ENCODE measurements at regions of chr5 and their contacts with region 1.

Region 1: DNA sequence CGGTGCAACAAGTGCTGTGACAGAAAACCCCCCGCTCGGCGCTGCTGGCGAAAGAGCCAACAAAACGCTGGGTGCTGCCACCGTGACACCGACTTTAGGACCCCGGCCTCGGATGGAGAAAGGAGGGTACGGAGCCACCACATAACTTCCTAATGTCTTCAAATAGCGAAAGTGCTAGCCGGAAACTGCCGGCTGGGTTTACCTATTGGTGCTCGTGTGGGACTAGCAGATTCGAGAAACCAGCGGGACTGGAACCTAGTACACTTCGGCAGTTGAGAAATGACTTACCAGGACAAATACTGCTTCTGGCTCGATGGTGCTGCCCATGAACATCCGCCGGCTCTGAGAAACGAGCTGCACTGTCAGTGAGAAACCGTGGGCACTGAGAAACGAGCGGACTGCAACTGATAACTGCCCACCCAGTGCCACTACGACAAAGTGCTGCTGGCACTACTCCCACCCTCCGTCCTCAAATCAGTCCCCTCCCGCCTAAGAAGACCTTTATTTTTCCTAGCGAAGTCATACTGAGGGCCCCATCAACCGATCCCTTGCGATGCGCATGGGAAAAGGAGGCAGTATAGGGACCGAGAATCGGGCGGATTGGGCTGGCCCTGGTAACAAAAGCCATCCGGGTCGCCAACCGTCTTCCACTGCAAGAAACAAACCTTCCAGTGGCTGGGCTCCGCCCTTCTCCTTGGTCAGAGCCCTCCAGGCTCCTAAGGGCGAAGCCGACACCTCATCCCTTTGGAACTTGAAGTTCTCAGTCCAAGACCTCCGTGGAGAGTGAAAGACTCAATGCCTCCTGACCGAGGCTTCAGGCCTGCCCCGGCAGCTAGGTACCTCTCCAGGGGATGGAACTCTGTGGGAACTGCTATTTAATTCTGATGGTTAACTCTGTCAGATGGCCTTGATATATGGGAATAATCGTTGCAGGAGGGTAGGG is 27.0 kb upstream of the ANXA2R start:
- DNase-seq: peak; percentile 84 to 94 (median 90)
- ATAC-seq: peak; percentile 45
- H3K4me3 ChIP-seq: peak overlapping the region; percentile 78
- H3K4me3 Mint-ChIP-seq: peak overlapping the region; percentile 97
- H3K27ac ChIP-seq: peak overlapping the region; percentile 97 to 98
- H3K27ac Mint-ChIP-seq: peak overlapping the region; percentile 96
- H3K4me1 ChIP-seq: peaks cover 55% of the 10 kb centered on the region
- H3K4me1 Mint-ChIP-seq: peaks cover 49% of the 10 kb centered on the region
- H3K27me3 ChIP-seq: no peaks in the 10 kb centered on the region
- H3K27me3 Mint-ChIP-seq: no peaks in the 10 kb centered on the region
- CTCF ChIP-seq: no peak

Region 2: DNA sequence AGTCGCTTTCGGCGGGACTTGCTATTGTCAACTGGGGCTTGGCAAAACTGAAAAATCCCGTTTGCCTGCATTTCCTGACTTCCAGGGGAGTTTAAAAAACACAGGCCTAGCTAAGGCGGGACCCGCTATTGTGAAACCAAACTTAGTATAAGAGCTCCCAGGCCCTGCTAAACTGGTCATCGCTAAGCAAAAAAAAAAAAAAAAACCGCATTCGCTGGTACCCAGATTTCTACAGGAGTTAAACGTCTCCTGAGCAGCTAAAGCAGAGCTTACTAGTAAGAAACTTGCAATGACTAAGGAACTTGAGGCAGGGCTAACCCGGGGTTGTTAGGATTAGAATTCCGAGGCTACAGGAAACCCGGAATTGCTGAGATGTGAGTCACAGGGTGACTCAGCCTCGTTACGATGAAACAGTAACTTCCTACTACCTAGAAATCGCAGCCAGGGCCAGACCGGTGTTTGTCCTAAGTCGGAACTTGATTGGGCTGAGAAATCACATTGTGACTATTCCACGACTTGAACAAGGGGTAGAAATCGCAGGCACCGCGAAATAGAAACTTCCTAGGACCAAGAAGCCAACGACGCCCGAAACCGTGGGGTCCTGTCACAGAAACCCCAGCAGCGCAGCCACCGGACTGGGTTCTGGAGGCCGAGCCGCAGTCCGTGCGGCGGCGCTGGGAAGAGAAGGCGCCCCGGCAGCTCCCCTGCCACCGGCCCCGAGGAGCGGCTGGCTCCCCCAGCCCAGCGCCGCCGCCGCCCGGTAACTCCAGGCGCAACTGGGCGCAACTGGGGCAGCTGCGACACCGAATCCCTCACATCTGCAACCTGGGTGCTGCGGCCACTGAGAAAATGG is 116.4 kb before region 1 on chr5:
- CTCF ChIA-PET with region 1: interaction called, 6 read pairs
- POLR2A ChIA-PET with region 1: interaction called, 109 read pairs
- intact Hi-C with region 1: loop called (anchors 1 to 5 kb)
- DNase-seq: peak; percentile 35 to 90 (median 61)
- ATAC-seq: peak; percentile 41
- H3K4me3 ChIP-seq: peak overlapping the region; percentile 75
- H3K4me3 Mint-ChIP-seq: peak overlapping the region; percentile 98
- H3K27ac ChIP-seq: peak overlapping the region; percentile 96 to 98
- H3K27ac Mint-ChIP-seq: peak overlapping the region; percentile 99
- H3K4me1 ChIP-seq: peaks cover 45% of the 10 kb centered on the region
- H3K4me1 Mint-ChIP-seq: peaks cover 30% of the 10 kb centered on the region
- H3K27me3 ChIP-seq: no peaks in the 10 kb centered on the region
- H3K27me3 Mint-ChIP-seq: no peaks in the 10 kb centered on the region
- CTCF ChIP-seq: no peak

Region 3: DNA sequence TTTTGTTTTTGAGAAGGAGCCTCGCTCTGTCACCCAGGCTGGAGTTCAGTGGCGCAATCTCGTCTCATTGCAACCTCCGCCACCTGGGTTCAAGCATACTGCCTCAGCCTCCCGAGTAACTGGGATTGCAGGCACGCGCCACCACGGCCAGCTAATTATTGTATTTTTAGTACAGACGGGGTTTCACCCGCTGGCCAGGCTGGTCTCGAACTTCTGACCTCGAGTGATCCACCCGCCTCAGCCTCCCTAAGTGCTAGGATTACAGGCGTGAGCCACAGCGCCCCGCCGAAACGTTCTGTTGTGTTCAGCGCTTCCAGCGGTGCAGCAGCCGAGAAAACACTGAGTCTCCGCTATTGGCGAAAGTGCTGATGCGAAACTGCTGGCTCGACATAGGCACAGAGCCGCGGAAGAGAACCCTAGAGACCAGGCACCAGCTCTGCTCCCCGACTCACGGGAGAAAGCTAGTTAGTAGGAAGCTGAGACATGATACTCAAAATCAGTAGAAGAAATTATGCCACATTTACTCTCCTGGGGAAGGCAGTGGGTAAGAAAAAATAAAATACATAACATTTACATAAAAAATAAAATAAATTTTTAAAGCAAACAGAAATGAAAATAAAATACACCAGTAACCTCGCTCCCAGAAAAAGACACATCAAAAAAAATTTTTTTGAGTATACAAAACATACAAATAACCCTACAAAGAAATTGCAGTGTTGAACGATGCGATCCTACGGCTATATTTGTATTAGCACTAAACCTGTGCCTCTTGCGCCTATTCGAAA is 58.5 kb before region 1 on chr5:
- CTCF ChIA-PET with region 1: interaction called, 21 read pairs
- POLR2A ChIA-PET with region 1: interaction called, 398 read pairs
- intact Hi-C with region 1: loop called (anchors 1 kb)
- DNase-seq: peak; percentile 87 to 97 (median 92)
- ATAC-seq: peak; percentile 63
- H3K4me3 ChIP-seq: peak overlapping the region; percentile 82
- H3K4me3 Mint-ChIP-seq: peak overlapping the region; percentile 92
- H3K27ac ChIP-seq: peak overlapping the region; percentile 91 to 95
- H3K27ac Mint-ChIP-seq: peak overlapping the region; percentile 95
- H3K4me1 ChIP-seq: peaks cover 36% of the 10 kb centered on the region
- H3K4me1 Mint-ChIP-seq: peaks cover 42% of the 10 kb centered on the region
- H3K27me3 ChIP-seq: no peaks in the 10 kb centered on the region
- H3K27me3 Mint-ChIP-seq: no peaks in the 10 kb centered on the region
- CTCF ChIP-seq: no peak

Region 4: DNA sequence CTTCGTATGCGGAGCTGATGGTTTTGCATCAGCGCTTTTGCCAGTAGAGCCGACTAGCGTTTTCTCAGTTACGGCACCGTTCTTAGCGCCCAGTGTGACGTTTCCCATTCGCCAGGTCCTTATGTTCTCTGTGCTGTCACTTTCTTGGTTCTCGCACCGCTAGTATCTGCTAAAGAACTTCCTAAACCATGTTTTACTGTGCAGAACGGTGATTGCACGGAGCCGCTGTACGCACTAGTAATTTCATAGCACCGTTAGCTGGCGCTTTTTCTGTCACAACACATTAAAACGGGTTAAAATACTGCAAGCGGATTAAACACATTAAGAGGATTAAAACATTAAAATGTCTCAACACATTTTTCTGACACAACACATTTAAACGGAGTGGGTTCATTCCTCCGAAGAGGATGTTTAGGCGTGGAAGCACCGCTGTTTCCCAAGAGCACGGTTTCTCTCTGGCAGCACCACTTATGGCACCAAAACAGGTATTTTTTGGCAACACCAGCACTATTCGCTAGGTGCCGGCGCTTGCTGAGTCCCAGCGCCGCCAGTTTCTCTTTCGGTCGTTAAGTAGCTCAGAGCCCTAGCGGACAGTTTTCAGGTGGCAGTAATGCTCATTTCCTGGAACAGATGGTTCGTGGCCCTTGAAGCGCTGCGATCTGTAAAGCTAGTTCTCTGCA is 47.3 kb before region 1 on chr5:
- CTCF ChIA-PET with region 1: interaction called, 31 read pairs
- POLR2A ChIA-PET with region 1: interaction called, 398 read pairs
- intact Hi-C with region 1: loop called in 1 of 2 experiments (anchors 1 kb)
- DNase-seq: peak; percentile 73 to 97 (median 84)
- ATAC-seq: peak; percentile 61
- H3K4me3 ChIP-seq: peak overlapping the region; percentile 80
- H3K4me3 Mint-ChIP-seq: peak overlapping the region; percentile 99
- H3K27ac ChIP-seq: peak overlapping the region; percentile 98
- H3K27ac Mint-ChIP-seq: peak overlapping the region; percentile 100
- H3K4me1 ChIP-seq: peaks cover 42% of the 10 kb centered on the region
- H3K4me1 Mint-ChIP-seq: peaks cover 57% of the 10 kb centered on the region
- H3K27me3 ChIP-seq: no peaks in the 10 kb centered on the region
- H3K27me3 Mint-ChIP-seq: no peaks in the 10 kb centered on the region
- CTCF ChIP-seq: peak; percentile 69

Region 5: DNA sequence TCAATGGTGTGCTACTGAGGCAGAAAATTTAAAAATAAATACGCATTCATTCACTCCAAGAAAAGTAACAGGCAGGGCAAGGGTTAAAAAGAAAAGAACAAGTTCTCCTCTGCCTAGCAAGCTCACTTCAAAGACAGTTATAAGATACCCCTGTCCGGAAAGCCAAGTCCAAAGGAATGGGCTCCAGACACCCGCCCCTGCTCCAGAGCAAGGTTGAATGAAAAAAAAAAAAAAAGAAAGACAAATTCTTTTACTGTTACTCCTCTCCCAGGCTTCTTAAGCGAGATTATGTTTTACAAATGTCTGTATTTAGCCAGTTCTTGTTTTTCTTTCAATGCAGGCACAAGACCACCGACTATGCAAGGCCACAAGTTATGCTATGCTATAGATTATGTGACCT is 17.8 kb before region 1 on chr5:
- CTCF ChIA-PET with region 1: interaction called, 65 read pairs
- POLR2A ChIA-PET with region 1: interaction called, 703 read pairs
- intact Hi-C with region 1: no loop called
- DNase-seq: no peak
- ATAC-seq: no peak
- H3K4me3 ChIP-seq: no peak overlapping the region
- H3K4me3 Mint-ChIP-seq: no peak overlapping the region
- H3K27ac ChIP-seq: no peak overlapping the region
- H3K27ac Mint-ChIP-seq: peak overlapping the region; percentile 41
- H3K4me1 ChIP-seq: peaks cover 14% of the 10 kb centered on the region
- H3K4me1 Mint-ChIP-seq: peaks cover 46% of the 10 kb centered on the region
- H3K27me3 ChIP-seq: no peaks in the 10 kb centered on the region
- H3K27me3 Mint-ChIP-seq: no peaks in the 10 kb centered on the region
- CTCF ChIP-seq: no peak

Region 6: GRCh38 chr5:43105369-43106289 is 38.6 kb after region 1 on chr5:
- CTCF ChIA-PET with region 1: interaction called, 9 read pairs
- POLR2A ChIA-PET with region 1: interaction called, 12 read pairs
- intact Hi-C with region 1: loop called (anchors 2 kb)
- DNase-seq: peak; percentile 85 to 97 (median 88)
- ATAC-seq: peak; percentile 90
- H3K4me3 ChIP-seq: peak overlapping the region; percentile 51
- H3K4me3 Mint-ChIP-seq: peak overlapping the region; percentile 91
- H3K27ac ChIP-seq: no peak overlapping the region
- H3K27ac Mint-ChIP-seq: peak overlapping the region; percentile 78
- H3K4me1 ChIP-seq: peaks cover 36% of the 10 kb centered on the region
- H3K4me1 Mint-ChIP-seq: peaks cover 41% of the 10 kb centered on the region
- H3K27me3 ChIP-seq: no peaks in the 10 kb centered on the region
- H3K27me3 Mint-ChIP-seq: no peaks in the 10 kb centered on the region
- CTCF ChIP-seq: peak; percentile 100

Region 7: DNA sequence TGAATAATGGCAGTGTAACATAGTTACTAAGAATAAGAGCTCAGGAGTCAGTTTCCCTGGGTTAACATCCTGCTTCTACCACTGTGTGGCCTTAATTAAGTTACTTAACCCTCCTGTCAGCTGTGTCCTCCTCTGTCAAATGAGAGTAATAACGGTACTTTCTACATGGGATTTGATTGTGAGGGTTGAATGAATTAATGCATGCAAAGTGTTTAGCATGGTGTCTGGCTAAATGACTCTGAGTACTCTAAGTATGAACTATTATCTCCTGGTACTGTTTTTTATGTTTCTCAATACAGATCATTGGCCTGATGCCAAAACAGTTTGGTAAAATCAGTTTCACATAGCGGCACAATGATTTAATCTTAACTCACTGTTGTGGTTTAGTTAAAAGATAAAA is 73.2 kb after region 1 on chr5:
- CTCF ChIA-PET with region 1: no interaction called
- POLR2A ChIA-PET with region 1: no interaction called
- intact Hi-C with region 1: no loop called
- DNase-seq: peak in 3 of 14 experiments; percentile 30 to 44 (median 34)
- ATAC-seq: peak; percentile 29
- H3K4me3 ChIP-seq: no peak overlapping the region
- H3K4me3 Mint-ChIP-seq: no peak overlapping the region
- H3K27ac ChIP-seq: peak overlapping the region in 1 of 2 donors; percentile 36
- H3K27ac Mint-ChIP-seq: peak overlapping the region; percentile 61
- H3K4me1 ChIP-seq: peaks cover 11% of the 10 kb centered on the region
- H3K4me1 Mint-ChIP-seq: peaks cover 61% of the 10 kb centered on the region
- H3K27me3 ChIP-seq: no peaks in the 10 kb centered on the region
- H3K27me3 Mint-ChIP-seq: no peaks in the 10 kb centered on the region
- CTCF ChIP-seq: no peak

Region 8: DNA sequence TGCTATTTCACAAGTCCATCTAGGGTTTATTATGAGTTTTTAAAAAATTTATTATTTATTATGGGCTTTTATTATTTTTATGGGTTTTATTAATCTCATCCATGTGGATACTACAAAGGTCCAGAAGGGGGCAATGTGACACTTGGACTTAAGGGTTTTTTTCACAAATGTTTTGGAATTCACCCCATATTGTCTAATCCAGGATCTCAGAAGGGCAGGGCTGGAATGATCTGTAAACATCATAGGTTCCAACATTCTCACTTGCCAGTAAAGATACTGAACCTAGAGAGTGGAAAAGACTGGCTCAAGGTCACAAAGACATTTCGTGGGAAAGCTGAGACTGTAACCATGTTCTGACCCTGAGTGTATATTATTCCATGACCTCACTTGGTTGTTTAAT is 160.6 kb after region 1 on chr5:
- CTCF ChIA-PET with region 1: no interaction called
- POLR2A ChIA-PET with region 1: no interaction called
- intact Hi-C with region 1: no loop called
- DNase-seq: peak in 2 of 14 experiments; percentile 5 to 11
- ATAC-seq: no peak
- H3K4me3 ChIP-seq: no peak overlapping the region
- H3K4me3 Mint-ChIP-seq: no peak overlapping the region
- H3K27ac ChIP-seq: no peak overlapping the region
- H3K27ac Mint-ChIP-seq: no peak overlapping the region
- H3K4me1 ChIP-seq: no peaks in the 10 kb centered on the region
- H3K4me1 Mint-ChIP-seq: no peaks in the 10 kb centered on the region
- H3K27me3 ChIP-seq: no peaks in the 10 kb centered on the region
- H3K27me3 Mint-ChIP-seq: no peaks in the 10 kb centered on the region
- CTCF ChIP-seq: no peak

Region 9: GRCh38 chr5:43389679-43390329 is 322.7 kb after region 1 on chr5:
- CTCF ChIA-PET with region 1: no interaction called
- POLR2A ChIA-PET with region 1: no interaction called
- intact Hi-C with region 1: loop called (anchors 10 kb)
- DNase-seq: peak in 12 of 14 experiments; percentile 6 to 79 (median 18)
- ATAC-seq: peak; percentile 82
- H3K4me3 ChIP-seq: no peak overlapping the region
- H3K4me3 Mint-ChIP-seq: no peak overlapping the region
- H3K27ac ChIP-seq: no peak overlapping the region
- H3K27ac Mint-ChIP-seq: peak overlapping the region; percentile 28
- H3K4me1 ChIP-seq: no peaks in the 10 kb centered on the region
- H3K4me1 Mint-ChIP-seq: peaks cover 27% of the 10 kb centered on the region
- H3K27me3 ChIP-seq: no peaks in the 10 kb centered on the region
- H3K27me3 Mint-ChIP-seq: no peaks in the 10 kb centered on the region
- CTCF ChIP-seq: peak; percentile 85